ENCODE measurements at regions of chr1 and their contacts with region 1.

Region 1: DNA sequence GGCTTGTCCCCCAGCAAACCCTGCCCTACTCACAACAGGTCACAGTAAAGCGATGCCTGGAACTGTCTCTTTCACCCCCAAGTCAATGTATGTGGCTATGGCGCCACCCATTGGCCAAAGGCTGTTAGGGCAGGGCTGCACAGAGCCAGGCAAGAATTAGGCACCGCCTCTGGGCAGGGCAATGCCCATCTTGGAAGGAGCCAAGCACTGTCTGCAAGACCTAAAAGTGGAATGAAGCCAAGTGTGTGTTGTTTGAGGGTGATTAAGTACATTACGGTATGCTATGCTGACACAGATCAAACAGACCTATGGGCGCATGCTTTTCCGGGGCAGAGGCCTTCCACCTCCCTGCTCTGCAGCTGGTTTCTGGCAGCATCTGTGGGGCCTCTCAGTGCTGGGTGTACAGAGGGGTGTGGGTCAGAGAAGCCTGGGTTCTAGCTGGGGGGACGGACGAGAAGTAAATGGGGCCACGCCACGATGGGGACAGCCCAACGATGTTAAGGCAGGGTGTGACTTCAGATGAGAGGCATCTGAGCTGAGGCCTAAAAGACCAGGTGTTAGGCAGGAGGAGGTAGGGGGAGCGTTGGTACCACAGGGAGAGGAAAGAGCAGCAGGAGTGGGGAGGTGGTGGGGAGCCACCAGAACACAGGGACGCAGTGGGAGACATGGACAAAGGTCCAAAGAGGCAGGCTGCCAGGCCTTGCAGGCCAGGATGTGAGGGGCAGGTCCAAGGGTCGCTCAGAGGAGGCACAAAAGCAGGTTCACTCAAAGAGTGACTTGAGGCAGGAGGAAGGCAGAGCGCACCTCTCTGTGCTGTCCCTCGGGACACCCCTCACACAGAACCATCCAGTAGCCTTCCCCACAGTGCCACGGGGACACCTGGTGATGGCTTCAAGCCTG is 49.8 kb downstream of the ACOT7 start:
- DNase-seq: peak; percentile 100
- ATAC-seq: peak; percentile 92
- H3K4me3 ChIP-seq: no peak overlapping the region
- H3K27ac ChIP-seq: peak overlapping the region; percentile 86
- H3K4me1 ChIP-seq: peaks cover 26% of the 10 kb centered on the region
- H3K27me3 ChIP-seq: no peaks in the 10 kb centered on the region
- CTCF ChIP-seq: peak; percentile 100

Region 2: GRCh38 chr1:6108937-6109614 is 234.7 kb before region 1 on chr1:
- CTCF ChIA-PET with region 1: no interaction called
- POLR2A ChIA-PET with region 1: no interaction called
- intact Hi-C with region 1: loop called (anchors 2 kb)
- DNase-seq: peak; percentile 89
- ATAC-seq: peak; percentile 96
- H3K4me3 ChIP-seq: no peak overlapping the region
- H3K27ac ChIP-seq: no peak overlapping the region
- H3K4me1 ChIP-seq: peaks cover 4% of the 10 kb centered on the region; the same call in 1 of the 2 replicates
- H3K27me3 ChIP-seq: no peaks in the 10 kb centered on the region
- CTCF ChIP-seq: peak; percentile 96

Region 3: GRCh38 chr1:6259491-6260425 is 84.0 kb before region 1 on chr1:
- CTCF ChIA-PET with region 1: interaction called, 3 read pairs
- POLR2A ChIA-PET with region 1: no interaction called
- intact Hi-C with region 1: loop called (anchors 1 kb)
- DNase-seq: peak; percentile 92
- ATAC-seq: peak; percentile 38
- H3K4me3 ChIP-seq: peak overlapping the region; percentile 80
- H3K27ac ChIP-seq: peak overlapping the region; percentile 75
- H3K4me1 ChIP-seq: peaks cover 21% of the 10 kb centered on the region
- H3K27me3 ChIP-seq: no peaks in the 10 kb centered on the region
- CTCF ChIP-seq: no peak

Region 4: GRCh38 chr1:6300342-6301048 is 43.3 kb before region 1 on chr1:
- CTCF ChIA-PET with region 1: no interaction called
- POLR2A ChIA-PET with region 1: no interaction called
- intact Hi-C with region 1: loop called (anchors 1 kb)
- DNase-seq: peak; percentile 92
- ATAC-seq: peak; percentile 66
- H3K4me3 ChIP-seq: peak overlapping the region; percentile 30
- H3K27ac ChIP-seq: peak overlapping the region; percentile 94
- H3K4me1 ChIP-seq: peaks cover 53% of the 10 kb centered on the region
- H3K27me3 ChIP-seq: no peaks in the 10 kb centered on the region
- CTCF ChIP-seq: peak; percentile 47

Region 5: GRCh38 chr1:6393400-6394187 is 49.8 kb after region 1 on chr1 and contains the start of gene ACOT7:
- CTCF ChIA-PET with region 1: interaction called, 12 read pairs
- POLR2A ChIA-PET with region 1: no interaction called
- intact Hi-C with region 1: no loop called
- DNase-seq: peak; percentile 97
- ATAC-seq: peak; percentile 87
- H3K4me3 ChIP-seq: peak within 1 kb of the TSS; percentile 78
- H3K27ac ChIP-seq: peak within 1 kb of the TSS; percentile 90
- H3K4me1 ChIP-seq: peaks cover 17% of the 10 kb centered on the region
- H3K27me3 ChIP-seq: no peaks in the 10 kb centered on the region
- CTCF ChIP-seq: peak; percentile 22; the same call in 1 of the 2 replicates
- total RNA-seq, gene ACOT7: 164 and 165 TPM in 2 replicates

Region 6: GRCh38 chr1:6475381-6476133 is 131.8 kb after region 1 on chr1:
- CTCF ChIA-PET with region 1: no interaction called
- POLR2A ChIA-PET with region 1: no interaction called
- intact Hi-C with region 1: no loop called
- DNase-seq: peak; percentile 87
- ATAC-seq: peak; percentile 89
- H3K4me3 ChIP-seq: no peak overlapping the region
- H3K27ac ChIP-seq: no peak overlapping the region
- H3K4me1 ChIP-seq: no peaks in the 10 kb centered on the region
- H3K27me3 ChIP-seq: no peaks in the 10 kb centered on the region
- CTCF ChIP-seq: peak; percentile 99